Activated CD8-positive, alpha-beta memory T cell treated with anti-CD3 and anti-CD28 coated beads, Interleukin-2, amount 10 ng/mL, durations not matched to agents 7 days and 5 days (primary cell): ENCODE measurements at regions of chr17 and their contacts with region 1.

Region 1: GRCh38 chr17:76681222-76682137 is 29.3 kb downstream of the MXRA7 start:
- DNase-seq: peak; percentile 82
- ATAC-seq: peak; percentile 70
- H3K4me3 Mint-ChIP-seq: no peak overlapping the region
- H3K27ac Mint-ChIP-seq: no peak overlapping the region
- H3K4me1 Mint-ChIP-seq: peaks cover 12% of the 10 kb centered on the region
- H3K27me3 Mint-ChIP-seq: no peaks in the 10 kb centered on the region

Region 2: DNA sequence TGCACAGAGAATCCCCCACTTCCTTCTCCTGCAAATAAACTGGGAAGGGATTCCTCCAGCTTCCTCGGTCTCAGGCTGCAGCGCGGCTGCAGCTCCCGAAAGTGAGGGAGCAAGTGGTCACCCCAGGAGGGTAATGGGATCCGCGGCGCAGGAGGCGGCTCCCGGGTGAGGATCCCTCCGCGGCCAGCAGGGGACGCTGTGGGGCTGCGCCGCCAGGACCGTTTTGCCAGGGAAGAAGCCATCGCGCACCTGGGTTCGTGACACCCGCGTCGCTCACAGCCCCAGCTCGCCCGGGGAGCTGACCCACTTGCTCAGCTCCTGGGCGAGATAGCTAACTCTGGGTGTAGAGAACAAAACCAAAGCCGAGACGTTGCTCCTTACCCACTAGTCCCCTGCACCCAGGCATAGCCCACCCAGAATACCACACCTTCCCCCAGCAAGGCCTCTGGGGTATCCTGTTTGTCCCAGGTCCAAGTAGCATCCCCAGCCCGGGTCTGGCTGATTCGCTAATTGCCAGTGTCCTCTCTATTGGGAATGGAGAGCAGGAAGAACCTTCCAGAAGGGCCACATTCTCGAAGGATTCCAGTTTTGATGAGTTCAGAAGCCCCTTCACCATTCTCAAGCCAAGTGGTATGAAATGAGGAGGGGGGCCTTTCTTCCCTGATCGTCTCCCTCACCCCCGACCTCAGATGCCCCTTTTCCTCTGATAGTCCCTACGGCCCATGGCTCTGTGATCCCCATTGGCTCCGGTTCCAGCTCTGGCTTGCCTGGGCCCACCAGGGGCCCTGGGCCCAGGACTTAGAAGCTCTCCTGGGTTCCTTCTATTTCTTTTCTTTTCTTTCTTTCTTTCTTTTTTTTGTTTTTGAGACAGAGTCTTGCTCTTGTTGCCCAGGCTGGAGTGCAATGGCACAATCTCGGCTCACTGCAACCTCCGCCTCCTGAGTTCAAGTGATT is 158.1 kb before region 1 on chr17:
- CTCF ChIA-PET with region 1: interaction called, 25 read pairs
- DNase-seq: peak; percentile 85
- ATAC-seq: peak; percentile 88
- H3K4me3 Mint-ChIP-seq: peak overlapping the region; percentile 8
- H3K27ac Mint-ChIP-seq: no peak overlapping the region
- H3K4me1 Mint-ChIP-seq: peaks cover 15% of the 10 kb centered on the region
- H3K27me3 Mint-ChIP-seq: peaks cover 7% of the 10 kb centered on the region

Region 3: DNA sequence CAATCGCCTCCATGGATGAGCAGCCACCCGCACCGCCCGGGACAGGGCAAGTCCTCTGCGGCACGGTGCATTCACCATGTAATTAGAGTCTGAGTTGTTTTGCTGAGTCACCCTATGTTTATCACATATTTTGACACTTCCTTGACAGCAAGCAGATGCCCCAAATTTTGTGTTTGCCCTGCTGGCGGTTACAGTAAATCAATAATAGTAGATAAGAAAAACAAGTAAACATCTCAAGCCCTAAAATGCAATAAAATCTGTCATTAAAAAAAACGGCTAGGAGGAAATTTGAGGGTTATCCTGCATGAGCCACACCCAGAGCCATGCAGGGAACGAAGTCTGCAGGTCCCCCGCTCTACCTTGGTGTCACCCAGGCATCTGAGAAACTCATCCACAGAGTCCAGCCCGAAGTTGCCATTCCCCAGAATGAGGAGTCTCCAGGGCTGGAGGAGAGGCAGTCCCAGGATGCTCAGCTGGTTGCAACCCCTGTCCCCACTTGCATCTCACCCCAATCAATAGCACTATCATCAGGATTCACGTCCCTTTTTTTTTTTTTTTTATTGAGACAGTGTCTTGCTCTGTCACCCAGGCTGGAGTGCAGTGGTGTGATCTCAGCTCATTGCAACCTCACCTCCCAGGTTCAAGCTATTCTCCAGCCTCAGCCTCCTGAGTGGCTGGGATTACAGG is 21.4 kb before region 1 on chr17:
- CTCF ChIA-PET with region 1: interaction called, 13 read pairs
- DNase-seq: no peak
- ATAC-seq: peak; percentile 70
- H3K4me3 Mint-ChIP-seq: no peak overlapping the region
- H3K27ac Mint-ChIP-seq: peak overlapping the region; percentile 69
- H3K4me1 Mint-ChIP-seq: peaks cover 28% of the 10 kb centered on the region
- H3K27me3 Mint-ChIP-seq: peaks cover 7% of the 10 kb centered on the region

Region 4: DNA sequence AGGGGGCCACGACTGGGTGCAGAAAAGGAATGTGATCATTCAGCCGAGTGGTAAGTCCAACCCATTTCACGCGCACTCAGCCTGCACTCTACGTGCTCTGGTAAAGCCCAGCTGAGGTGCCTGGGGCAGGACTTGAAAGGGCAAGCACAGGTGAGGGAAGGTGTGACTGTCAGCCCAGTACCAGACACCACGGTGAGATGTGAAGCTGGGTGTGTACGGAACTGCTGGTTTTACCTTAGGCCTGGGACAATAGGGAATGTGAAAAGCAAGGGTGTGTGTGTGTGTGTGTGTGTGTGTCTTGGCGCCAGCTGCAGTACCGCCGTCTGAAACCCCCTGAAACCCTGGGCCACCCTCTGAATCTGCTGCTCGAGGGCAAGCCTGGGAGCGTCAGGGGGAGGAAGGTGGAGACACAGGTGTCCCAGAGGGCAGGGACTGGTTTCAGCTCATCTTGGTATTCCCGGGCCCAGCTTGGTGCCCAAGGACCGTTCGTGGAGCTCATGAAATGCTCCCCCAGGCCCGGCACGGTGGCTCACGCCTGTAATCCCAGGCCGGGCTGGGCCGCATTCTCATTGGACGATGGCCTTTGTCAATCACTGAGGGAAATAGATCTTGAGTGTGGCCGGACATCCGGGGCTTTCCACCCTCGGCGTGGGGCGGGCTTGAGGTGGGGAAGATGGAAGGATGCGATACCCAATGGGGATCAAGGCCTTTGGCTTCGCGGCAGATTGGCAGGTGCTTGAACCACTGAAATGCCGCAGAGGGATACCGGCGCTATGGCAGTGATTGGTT is 10.2 kb before region 1 on chr17:
- CTCF ChIA-PET with region 1: interaction called, 17 read pairs
- DNase-seq: peak; percentile 100
- ATAC-seq: peak; percentile 99
- H3K4me3 Mint-ChIP-seq: peak overlapping the region; percentile 90
- H3K27ac Mint-ChIP-seq: peak overlapping the region; percentile 88
- H3K4me1 Mint-ChIP-seq: peaks cover 26% of the 10 kb centered on the region
- H3K27me3 Mint-ChIP-seq: peaks cover 6% of the 10 kb centered on the region

Region 5: GRCh38 chr17:76714822-76715495 is 33.5 kb after region 1 on chr17:
- CTCF ChIA-PET with region 1: interaction called, 50 read pairs
- DNase-seq: peak; percentile 86
- ATAC-seq: peak; percentile 2
- H3K4me3 Mint-ChIP-seq: peak overlapping the region; percentile 49
- H3K27ac Mint-ChIP-seq: peak overlapping the region; percentile 94
- H3K4me1 Mint-ChIP-seq: peaks cover 56% of the 10 kb centered on the region
- H3K27me3 Mint-ChIP-seq: no peaks in the 10 kb centered on the region